SK-N-SH (cell line): ENCODE measurements at regions of chr1 and their contacts with region 1.

Region 1: GRCh38 chr1:212477014-212477679 is 44.4 kb downstream of the NENF start:
- DNase-seq: peak; percentile 86
- H3K4me3 ChIP-seq: no peak overlapping the region; a peak in 1 of 4 replicates
- H3K27ac ChIP-seq: no peak overlapping the region
- H3K4me1 ChIP-seq: no peaks in the 10 kb centered on the region; a peak in 1 of 4 replicates
- H3K27me3 ChIP-seq: no peaks in the 10 kb centered on the region; the same call in 1 of the 2 replicates
- CTCF ChIP-seq: peak; percentile 90
- EP300 ChIP-seq: no peak
- RAD21 ChIP-seq: peak; percentile 96

Region 2: GRCh38 chr1:212247179-212247721 is 229.9 kb before region 1 on chr1:
- CTCF ChIA-PET with region 1: no interaction called
- POLR2A ChIA-PET with region 1: no interaction called
- DNase-seq: no peak
- H3K4me3 ChIP-seq: no peak overlapping the region
- H3K27ac ChIP-seq: no peak overlapping the region
- H3K4me1 ChIP-seq: no peaks in the 10 kb centered on the region
- H3K27me3 ChIP-seq: no peaks in the 10 kb centered on the region
- CTCF ChIP-seq: no peak
- EP300 ChIP-seq: no peak
- RAD21 ChIP-seq: no peak

Region 3: DNA sequence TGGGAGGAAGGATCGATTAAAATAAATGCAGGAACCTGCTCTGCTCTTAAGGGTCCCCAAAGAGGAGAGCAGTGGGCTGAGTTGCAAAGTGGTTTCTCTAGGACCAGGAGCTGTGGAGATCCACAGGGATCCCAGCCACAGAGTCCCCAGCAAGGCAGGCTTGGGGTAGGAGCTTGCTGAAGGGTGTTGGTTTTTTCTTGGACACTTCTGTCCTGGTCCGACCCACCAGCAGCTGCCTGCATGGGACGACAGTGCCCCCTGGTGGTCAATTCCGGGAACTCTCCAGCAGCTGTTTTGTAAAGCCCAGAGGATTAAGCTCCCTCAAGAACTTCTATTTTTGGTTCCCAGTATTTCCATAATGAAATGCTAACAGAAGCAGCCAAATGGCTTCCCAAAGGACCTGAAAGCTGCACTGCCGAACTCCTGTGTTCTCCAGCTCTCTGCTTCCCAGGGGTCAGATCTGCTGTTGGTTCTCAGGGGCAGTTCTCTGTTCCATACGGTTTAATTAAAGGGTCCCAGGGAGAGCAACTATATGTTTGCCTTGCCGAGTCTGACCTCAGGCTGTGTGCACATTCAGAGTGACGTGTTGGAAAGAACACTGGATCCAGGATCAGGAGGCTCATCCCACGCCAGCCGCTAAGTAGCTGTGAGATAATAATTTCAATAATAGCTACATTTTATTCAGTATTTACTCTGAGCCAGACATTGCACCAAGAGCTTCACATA is 21.2 kb before region 1 on chr1:
- CTCF ChIA-PET with region 1: interaction called, 36 read pairs
- POLR2A ChIA-PET with region 1: no interaction called
- DNase-seq: peak; percentile 83
- H3K4me3 ChIP-seq: no peak overlapping the region; a peak in 1 of 4 replicates
- H3K27ac ChIP-seq: no peak overlapping the region
- H3K4me1 ChIP-seq: peaks cover 0 to 14% of the 10 kb centered on the region in 2 experiments; a peak in 1 of 4 replicates
- H3K27me3 ChIP-seq: no peaks in the 10 kb centered on the region
- CTCF ChIP-seq: peak; percentile 97
- EP300 ChIP-seq: no peak
- RAD21 ChIP-seq: peak; percentile 98

Region 4: GRCh38 chr1:212512731-212513559 is 35.8 kb after region 1 on chr1:
- CTCF ChIA-PET with region 1: interaction called, 18 read pairs
- POLR2A ChIA-PET with region 1: no interaction called
- DNase-seq: no peak
- H3K4me3 ChIP-seq: no peak overlapping the region
- H3K27ac ChIP-seq: no peak overlapping the region
- H3K4me1 ChIP-seq: peaks cover 0 to 6% of the 10 kb centered on the region in 2 experiments; a peak in 2 of 4 replicates
- H3K27me3 ChIP-seq: no peaks in the 10 kb centered on the region; the same call in 1 of the 2 replicates
- CTCF ChIP-seq: no peak
- EP300 ChIP-seq: no peak
- RAD21 ChIP-seq: no peak

Region 5: GRCh38 chr1:212608209-212608955 is 131.2 kb after region 1 on chr1 and contains the start of gene ATF3:
- CTCF ChIA-PET with region 1: interaction called, 49 read pairs
- POLR2A ChIA-PET with region 1: interaction called, 8 read pairs
- DNase-seq: peak; percentile 98
- H3K4me3 ChIP-seq: peak within 1 kb of the TSS; percentile 67 to 71
- H3K27ac ChIP-seq: peak within 1 kb of the TSS; percentile 78 to 86
- H3K4me1 ChIP-seq: peaks cover 4 to 32% of the 10 kb centered on the region in 2 experiments; a peak in 2 of 4 replicates
- H3K27me3 ChIP-seq: peaks cover 42% of the 10 kb centered on the region
- CTCF ChIP-seq: no peak
- EP300 ChIP-seq: no peak
- RAD21 ChIP-seq: no peak
- polyA plus RNA-seq, gene ATF3: 29.7 TPM in 2 replicates

Region 6: GRCh38 chr1:212671342-212672031 is 194.3 kb after region 1 on chr1:
- CTCF ChIA-PET with region 1: interaction called, 51 read pairs
- POLR2A ChIA-PET with region 1: no interaction called
- DNase-seq: peak; percentile 40
- H3K4me3 ChIP-seq: no peak overlapping the region
- H3K27ac ChIP-seq: peak overlapping the region in 1 of 2 experiments; percentile 44; a peak in 1 of 4 replicates
- H3K4me1 ChIP-seq: peaks cover 29 to 46% of the 10 kb centered on the region in 2 experiments
- H3K27me3 ChIP-seq: no peaks in the 10 kb centered on the region
- CTCF ChIP-seq: no peak
- EP300 ChIP-seq: peak in 1 of 2 experiments; percentile 44; a peak in 2 of 4 replicates
- RAD21 ChIP-seq: no peak

Region 7: GRCh38 chr1:212749821-212750535 is 272.8 kb after region 1 on chr1:
- CTCF ChIA-PET with region 1: interaction called, 14 read pairs
- POLR2A ChIA-PET with region 1: no interaction called
- DNase-seq: peak; percentile 65
- H3K4me3 ChIP-seq: peak overlapping the region in 1 of 2 experiments; percentile 9; a peak in 1 of 4 replicates
- H3K27ac ChIP-seq: no peak overlapping the region
- H3K4me1 ChIP-seq: peaks cover 11 to 13% of the 10 kb centered on the region in 2 experiments; a peak in 3 of 4 replicates
- H3K27me3 ChIP-seq: no peaks in the 10 kb centered on the region
- CTCF ChIP-seq: peak; percentile 86
- EP300 ChIP-seq: no peak
- RAD21 ChIP-seq: peak; percentile 66